Astrocyte of the cerebellum (primary cell): ENCODE measurements at regions of chr20 and their contacts with region 1.

Region 1: DNA sequence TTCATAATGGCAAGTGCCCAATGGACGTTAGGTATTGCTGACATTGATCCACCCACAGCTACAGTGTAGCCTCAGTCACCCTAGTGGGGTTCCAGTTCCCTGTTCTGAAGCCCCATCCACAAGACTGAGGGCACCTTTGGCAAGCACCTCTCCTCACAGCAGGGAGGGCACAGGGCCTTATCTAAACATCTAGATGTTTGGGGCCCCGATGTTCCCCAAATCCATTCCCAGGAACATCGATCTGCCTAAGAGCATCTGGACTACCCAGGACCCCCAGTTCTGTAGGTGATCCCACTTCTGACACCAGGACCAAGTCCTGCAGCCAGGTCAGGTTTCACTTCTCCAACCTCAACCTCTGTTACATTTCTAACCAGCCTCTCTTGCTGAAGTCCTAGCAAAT is 10.6 kb downstream of the APCDD1L start:
- DNase-seq: no peak
- H3K4me3 ChIP-seq: no peak overlapping the region
- CTCF ChIP-seq: no peak

Region 2: DNA sequence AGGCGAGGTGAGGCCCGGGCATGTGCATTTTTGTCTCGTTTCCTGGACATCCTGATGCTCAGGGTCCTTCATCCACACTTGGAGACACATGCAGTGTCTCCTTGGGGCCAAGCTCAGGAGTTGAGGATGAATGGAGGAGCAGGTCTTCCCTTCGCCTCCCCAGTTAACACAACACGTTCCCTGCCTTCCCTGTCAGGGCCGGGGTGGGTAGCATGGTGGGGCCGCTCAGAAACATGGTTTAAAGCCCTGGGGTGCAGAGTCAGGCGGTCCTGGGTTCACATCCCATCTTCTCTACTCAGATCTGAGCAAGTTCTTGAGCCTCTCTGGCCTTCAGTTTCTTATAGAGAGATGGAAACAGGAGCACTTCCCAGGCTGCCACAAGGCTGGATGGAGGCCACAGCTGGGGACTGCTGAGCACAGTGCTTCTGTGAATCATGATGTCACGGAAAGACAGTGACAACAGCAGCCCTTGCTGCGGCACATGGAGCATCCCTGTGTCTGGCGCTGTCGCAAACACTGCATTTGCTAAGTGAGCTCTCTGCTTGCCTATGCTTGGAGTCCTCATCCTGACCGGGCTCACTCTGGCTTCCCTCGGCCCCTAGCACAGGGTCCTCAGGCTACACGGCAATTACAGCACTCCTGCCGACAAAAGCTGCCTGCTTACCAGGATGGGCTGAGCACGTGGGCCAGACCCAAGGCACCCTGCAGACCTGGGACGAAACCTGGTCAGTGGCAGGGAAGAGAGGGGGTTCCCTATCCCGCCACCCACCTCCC is 100.9 kb after region 1 on chr20:
- in situ Hi-C with region 1: loop called (anchors 5 kb)
- DNase-seq: no peak
- H3K4me3 ChIP-seq: no peak overlapping the region
- CTCF ChIP-seq: no peak